ENCODE measurements at regions of chr19 and their contacts with region 1.

Region 1: DNA sequence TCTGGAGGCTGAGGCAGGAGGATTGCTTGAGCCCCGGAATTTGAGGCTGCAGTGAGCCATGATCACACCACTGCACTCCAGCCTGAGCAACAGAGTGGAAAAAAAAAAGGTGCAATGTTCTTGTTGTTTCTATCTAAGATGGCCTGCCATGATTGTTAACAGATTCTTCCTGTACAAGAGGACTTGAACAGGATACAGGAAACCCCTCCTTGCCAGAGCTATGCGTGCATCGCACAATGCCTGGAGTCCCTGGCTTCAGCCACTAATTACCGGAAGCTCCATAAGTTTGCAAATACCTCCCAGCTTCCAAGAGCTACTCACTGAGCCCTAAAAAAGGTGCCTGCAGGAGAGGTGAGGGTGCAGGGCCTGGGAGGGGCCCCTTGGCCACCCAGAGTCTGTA is 13.1 kb upstream of the HIF3A start:
- DNase-seq: peak; percentile 29 to 58
- ATAC-seq: peak; percentile 66 to 89 (median 85)
- H3K4me3 ChIP-seq: peak overlapping the region in 1 of 10 donors; percentile 8
- H3K27ac ChIP-seq: peak overlapping the region in 9 of 10 donors; percentile 17 to 80 (median 60)
- H3K4me1 ChIP-seq: peaks cover 0 to 32% (median 15%) of the 10 kb centered on the region in 9 donors
- H3K27me3 ChIP-seq: peaks cover 0 to 4% (median 0%) of the 10 kb centered on the region in 7 donors
- CTCF ChIP-seq: no peak

Region 2: DNA sequence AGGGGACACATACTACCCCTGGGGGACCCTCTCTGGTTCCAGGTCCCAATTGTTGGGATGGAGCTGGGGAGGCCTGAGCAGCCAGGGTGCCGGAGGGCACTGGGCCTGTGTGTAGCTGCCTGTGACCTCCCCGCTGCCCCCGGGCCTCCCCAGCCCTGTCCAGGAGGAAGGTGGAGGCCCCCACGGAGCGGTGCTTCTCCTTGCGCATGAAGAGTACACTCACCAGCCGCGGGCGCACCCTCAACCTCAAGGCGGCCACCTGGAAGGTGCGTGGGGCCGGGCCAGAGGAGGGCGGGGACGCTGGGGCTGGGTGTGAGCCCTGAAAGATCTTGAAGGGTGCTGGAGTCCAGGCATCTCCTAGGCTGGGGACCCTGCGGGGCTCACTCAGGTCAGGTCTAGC is 24.7 kb after region 1 on chr19:
- intact Hi-C with region 1: no loop called
- DNase-seq: no peak
- ATAC-seq: peak in 2 of 8 donors; percentile 4 to 12
- H3K4me3 ChIP-seq: no peak overlapping the region
- H3K27ac ChIP-seq: no peak overlapping the region
- H3K4me1 ChIP-seq: peaks cover 3 to 20% (median 15%) of the 10 kb centered on the region in 9 donors
- H3K27me3 ChIP-seq: no peaks in the 10 kb centered on the region
- CTCF ChIP-seq: no peak

Region 3: DNA sequence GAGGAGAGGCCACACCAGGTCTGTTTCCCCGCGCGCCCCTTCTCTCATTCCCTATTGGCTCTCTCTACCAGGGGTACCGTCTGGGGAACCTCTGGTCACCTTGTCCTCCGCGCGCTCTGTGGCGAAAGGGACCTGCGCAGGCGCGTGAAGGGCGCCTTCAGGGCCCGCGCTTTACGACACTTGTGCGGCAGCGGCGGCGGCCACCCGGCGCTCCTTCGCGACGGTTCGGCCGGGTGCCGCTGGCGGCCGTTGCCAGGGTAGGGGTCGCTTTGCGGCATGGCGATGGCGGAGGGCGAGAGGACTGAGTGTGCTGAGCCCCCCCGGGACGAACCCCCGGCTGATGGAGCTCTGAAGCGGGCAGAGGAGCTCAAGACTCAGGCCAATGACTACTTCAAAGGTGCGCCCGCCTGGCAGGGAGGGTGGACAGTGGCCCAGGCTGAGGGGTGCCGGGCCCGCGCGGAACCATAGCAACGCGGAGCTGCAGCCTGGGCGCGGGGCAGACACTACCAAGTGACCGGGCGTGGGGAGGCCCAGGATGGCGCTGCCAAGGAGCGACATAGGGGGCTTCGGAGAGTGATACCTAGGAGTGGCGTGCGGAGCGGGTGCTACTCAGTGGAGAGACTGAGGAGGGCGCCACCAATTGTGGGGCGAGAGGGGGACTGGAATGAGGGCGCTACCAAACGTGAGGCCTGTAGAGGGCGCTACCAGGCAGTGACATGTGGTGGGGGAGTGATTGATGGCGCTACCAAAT is 63.2 kb after region 1 on chr19 and contains the start of gene PPP5C:
- intact Hi-C with region 1: loop called in 4 of 10 experiments (anchors 5 kb)
- DNase-seq: peak; percentile 90 to 93
- ATAC-seq: peak; percentile 84 to 89 (median 86)
- H3K4me3 ChIP-seq: peak within 1 kb of the TSS; percentile 70 to 100 (median 95)
- H3K27ac ChIP-seq: peak within 1 kb of the TSS; percentile 55 to 97 (median 89)
- H3K4me1 ChIP-seq: peaks cover 31 to 53% (median 50%) of the 10 kb centered on the region in 9 donors
- H3K27me3 ChIP-seq: no peaks in the 10 kb centered on the region
- CTCF ChIP-seq: peak; percentile 33 to 71 (median 66)
- total RNA-seq, gene PPP5C: 69.9 to 89.5 (median 76.5) TPM

Region 4: DNA sequence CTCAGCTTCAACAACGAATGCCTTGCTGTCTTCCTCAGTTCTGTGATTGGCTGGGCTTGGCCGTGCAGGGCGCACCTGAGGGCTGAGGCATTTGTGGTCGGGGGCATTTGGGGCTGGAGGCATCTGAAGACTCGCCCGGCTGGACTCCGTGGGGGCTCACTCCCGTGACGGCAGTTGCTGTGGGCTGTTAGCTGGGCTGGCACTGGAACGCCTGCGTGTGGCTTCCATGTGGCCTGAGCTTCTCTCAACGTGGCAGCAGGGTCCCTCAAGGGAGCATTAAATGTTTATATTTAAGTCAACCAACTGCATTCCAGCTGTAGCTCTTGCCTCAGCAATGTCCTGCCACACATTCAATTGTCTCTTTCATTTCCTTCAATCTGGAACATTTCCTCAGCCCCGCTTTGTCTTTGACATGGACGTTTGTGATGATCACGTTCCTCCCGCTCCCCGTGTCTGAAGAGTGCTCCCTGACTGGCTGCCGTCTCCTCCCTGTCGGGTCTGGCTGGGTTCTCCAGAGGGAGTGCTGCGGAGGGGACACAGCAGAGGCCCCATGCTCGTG is 108.6 kb after region 1 on chr19:
- intact Hi-C with region 1: loop called in 8 of 10 experiments (anchors 5 to 10 kb)
- DNase-seq: no peak
- ATAC-seq: no peak
- H3K4me3 ChIP-seq: no peak overlapping the region
- H3K27ac ChIP-seq: no peak overlapping the region
- H3K4me1 ChIP-seq: peaks cover 0 to 13% (median 0%) of the 10 kb centered on the region in 9 donors
- H3K27me3 ChIP-seq: peaks cover 0 to under 1% (median 0%) of the 10 kb centered on the region in 7 donors
- CTCF ChIP-seq: no peak

Region 5: GRCh38 chr19:46487802-46488445 is 204.2 kb after region 1 on chr19:
- intact Hi-C with region 1: loop called in 7 of 10 experiments (anchors 2 to 10 kb)
- DNase-seq: peak; percentile 71 to 82
- ATAC-seq: peak; percentile 72 to 86 (median 77)
- H3K4me3 ChIP-seq: peak overlapping the region in 9 of 10 donors; percentile 21 to 50 (median 46)
- H3K27ac ChIP-seq: no peak overlapping the region
- H3K4me1 ChIP-seq: peaks cover 9 to 38% (median 32%) of the 10 kb centered on the region in 9 donors
- H3K27me3 ChIP-seq: peaks cover 3 to 66% (median 58%) of the 10 kb centered on the region in 7 donors
- CTCF ChIP-seq: peak; percentile 80 to 95 (median 90)

Measured in heart right ventricle (tissue), 16 donors.